ENCODE measurements at regions of chr14 and their contacts with region 1.

Region 1: GRCh38 chr14:95265106-95266094 is 54.3 kb downstream of the CLMN start:
- DNase-seq: peak; percentile 96
- ATAC-seq: peak; percentile 91
- H3K4me3 ChIP-seq: peak overlapping the region; percentile 54; the same call in 1 of the 2 replicates
- H3K27ac ChIP-seq: peak overlapping the region; percentile 92
- H3K4me1 ChIP-seq: peaks cover 49% of the 10 kb centered on the region
- H3K27me3 ChIP-seq: no peaks in the 10 kb centered on the region
- CTCF ChIP-seq: no peak
- EP300 ChIP-seq: peak; percentile 98 to 100
- POLR2A ChIP-seq: no peak
- RAD21 ChIP-seq: peak; percentile 38; the same call in 1 of the 2 replicates

Region 2: GRCh38 chr14:95071649-95072280 is 193.6 kb before region 1 on chr14:
- CTCF ChIA-PET with region 1: no interaction called
- POLR2A ChIA-PET with region 1: no interaction called
- RAD21 ChIA-PET with region 1: no interaction called
- SMC1A ChIA-PET with region 1: no interaction called
- in situ Hi-C with region 1: no loop called
- intact Hi-C with region 1: no loop called
- DNase-seq: no peak
- ATAC-seq: no peak
- H3K4me3 ChIP-seq: no peak overlapping the region
- H3K27ac ChIP-seq: no peak overlapping the region
- H3K4me1 ChIP-seq: no peaks in the 10 kb centered on the region
- H3K27me3 ChIP-seq: peaks cover 0 to 1% of the 10 kb centered on the region in 2 experiments; a peak in 2 of 4 replicates
- CTCF ChIP-seq: no peak
- EP300 ChIP-seq: no peak
- POLR2A ChIP-seq: no peak
- RAD21 ChIP-seq: no peak

Region 3: GRCh38 chr14:95157327-95158189 is 107.8 kb before region 1 on chr14 and contains the start of gene DICER1:
- CTCF ChIA-PET with region 1: no interaction called
- POLR2A ChIA-PET with region 1: interaction called, 3 read pairs
- RAD21 ChIA-PET with region 1: no interaction called
- SMC1A ChIA-PET with region 1: no interaction called
- in situ Hi-C with region 1: no loop called
- intact Hi-C with region 1: loop called (anchors 5 kb)
- DNase-seq: peak; percentile 44
- ATAC-seq: peak; percentile 85
- H3K4me3 ChIP-seq: peak within 1 kb of the TSS; percentile 89
- H3K27ac ChIP-seq: peak within 1 kb of the TSS; percentile 95
- H3K4me1 ChIP-seq: peaks cover 8% of the 10 kb centered on the region; the same call in 1 of the 2 replicates
- H3K27me3 ChIP-seq: no peaks in the 10 kb centered on the region
- CTCF ChIP-seq: no peak
- EP300 ChIP-seq: no peak
- POLR2A ChIP-seq: peak; percentile 60
- RAD21 ChIP-seq: no peak
- polyA plus RNA-seq, gene DICER1: 6.8 to 9.8 TPM

Region 4: GRCh38 chr14:95211721-95212504 is 53.5 kb before region 1 on chr14:
- CTCF ChIA-PET with region 1: interaction called, 3 read pairs
- POLR2A ChIA-PET with region 1: no interaction called
- RAD21 ChIA-PET with region 1: interaction called, 9 read pairs
- SMC1A ChIA-PET with region 1: interaction called, 14 read pairs
- in situ Hi-C with region 1: no loop called
- intact Hi-C with region 1: loop called (anchors 2 kb)
- DNase-seq: peak; percentile 27
- ATAC-seq: peak; percentile 80
- H3K4me3 ChIP-seq: no peak overlapping the region
- H3K27ac ChIP-seq: no peak overlapping the region
- H3K4me1 ChIP-seq: peaks cover 30% of the 10 kb centered on the region
- H3K27me3 ChIP-seq: no peaks in the 10 kb centered on the region
- CTCF ChIP-seq: no peak
- EP300 ChIP-seq: peak; percentile 53 to 67; a peak in 3 of 4 replicates
- POLR2A ChIP-seq: no peak
- RAD21 ChIP-seq: no peak

Region 5: GRCh38 chr14:95319312-95320021 is 54.1 kb after region 1 on chr14 and contains the start of gene CLMN:
- CTCF ChIA-PET with region 1: no interaction called
- POLR2A ChIA-PET with region 1: interaction called, 4 read pairs
- RAD21 ChIA-PET with region 1: interaction called, 6 read pairs
- SMC1A ChIA-PET with region 1: interaction called, 7 read pairs
- in situ Hi-C with region 1: no loop called
- intact Hi-C with region 1: loop called (anchors 2 kb)
- DNase-seq: no peak
- ATAC-seq: peak; percentile 54
- H3K4me3 ChIP-seq: peak within 1 kb of the TSS; percentile 94
- H3K27ac ChIP-seq: 0 out of 2 replicates have a peak within 1 kb of the TSS, but pooled peaks have one; percentile 16
- H3K4me1 ChIP-seq: peaks cover 18% of the 10 kb centered on the region
- H3K27me3 ChIP-seq: no peaks in the 10 kb centered on the region
- CTCF ChIP-seq: no peak
- EP300 ChIP-seq: no peak
- POLR2A ChIP-seq: peak; percentile 56; the same call in 1 of the 2 replicates
- RAD21 ChIP-seq: 0 out of 2 replicates have a peak, but pooled peaks have one; percentile 1
- polyA plus RNA-seq, gene CLMN: 7.8 to 13.1 TPM

Region 6: GRCh38 chr14:95327558-95328374 is 62.4 kb after region 1 on chr14:
- CTCF ChIA-PET with region 1: interaction called, 4 read pairs
- POLR2A ChIA-PET with region 1: interaction called, 11 read pairs
- RAD21 ChIA-PET with region 1: interaction called, 18 read pairs
- SMC1A ChIA-PET with region 1: interaction called, 16 read pairs
- in situ Hi-C with region 1: no loop called
- intact Hi-C with region 1: loop called (anchors 2 kb)
- DNase-seq: peak; percentile 91
- ATAC-seq: peak; percentile 96
- H3K4me3 ChIP-seq: peak overlapping the region; percentile 46; the same call in 1 of the 2 replicates
- H3K27ac ChIP-seq: peak overlapping the region; percentile 77
- H3K4me1 ChIP-seq: peaks cover 22% of the 10 kb centered on the region
- H3K27me3 ChIP-seq: no peaks in the 10 kb centered on the region
- CTCF ChIP-seq: no peak
- EP300 ChIP-seq: peak; percentile 88 to 97
- POLR2A ChIP-seq: 0 out of 2 replicates have a peak, but pooled peaks have one; percentile 50
- RAD21 ChIP-seq: peak; percentile 22; the same call in 1 of the 2 replicates

Region 7: GRCh38 chr14:95361373-95362137 is 96.2 kb after region 1 on chr14:
- CTCF ChIA-PET with region 1: interaction called, 8 read pairs
- POLR2A ChIA-PET with region 1: no interaction called
- RAD21 ChIA-PET with region 1: interaction called, 3 read pairs
- SMC1A ChIA-PET with region 1: no interaction called
- in situ Hi-C with region 1: no loop called
- intact Hi-C with region 1: loop called (anchors 2 kb)
- DNase-seq: no peak
- ATAC-seq: peak; percentile 78
- H3K4me3 ChIP-seq: no peak overlapping the region
- H3K27ac ChIP-seq: no peak overlapping the region
- H3K4me1 ChIP-seq: peaks cover 7% of the 10 kb centered on the region
- H3K27me3 ChIP-seq: peaks cover 0 to 5% of the 10 kb centered on the region in 2 experiments; a peak in 3 of 4 replicates
- CTCF ChIP-seq: peak; percentile 53 to 78 (median 77)
- EP300 ChIP-seq: no peak
- POLR2A ChIP-seq: no peak
- RAD21 ChIP-seq: peak; percentile 62